ENCODE measurements at regions of chr18 and their contacts with region 1.

Region 1: GRCh38 chr18:3593904-3594661 is 144.1 kb downstream of the TGIF1 start:
- DNase-seq: peak; percentile 96
- H3K4me3 Mint-ChIP-seq: peak overlapping the region; percentile 89
- H3K27ac Mint-ChIP-seq: peak overlapping the region; percentile 97
- H3K4me1 Mint-ChIP-seq: peaks cover 39% of the 10 kb centered on the region
- H3K27me3 Mint-ChIP-seq: no peaks in the 10 kb centered on the region

Region 2: GRCh38 chr18:3062798-3063680 is 531.0 kb before region 1 on chr18:
- intact Hi-C with region 1: loop called (anchors 10 kb)
- DNase-seq: peak; percentile 93
- H3K4me3 Mint-ChIP-seq: peak overlapping the region; percentile 62
- H3K27ac Mint-ChIP-seq: peak overlapping the region; percentile 79
- H3K4me1 Mint-ChIP-seq: peaks cover 66% of the 10 kb centered on the region
- H3K27me3 Mint-ChIP-seq: no peaks in the 10 kb centered on the region

Region 3: GRCh38 chr18:3297025-3297984 is 296.8 kb before region 1 on chr18:
- intact Hi-C with region 1: loop called (anchors 2 kb)
- DNase-seq: peak; percentile 98
- H3K4me3 Mint-ChIP-seq: peak overlapping the region; percentile 93
- H3K27ac Mint-ChIP-seq: peak overlapping the region; percentile 82
- H3K4me1 Mint-ChIP-seq: peaks cover 11% of the 10 kb centered on the region
- H3K27me3 Mint-ChIP-seq: peaks cover 32% of the 10 kb centered on the region

Region 4: DNA sequence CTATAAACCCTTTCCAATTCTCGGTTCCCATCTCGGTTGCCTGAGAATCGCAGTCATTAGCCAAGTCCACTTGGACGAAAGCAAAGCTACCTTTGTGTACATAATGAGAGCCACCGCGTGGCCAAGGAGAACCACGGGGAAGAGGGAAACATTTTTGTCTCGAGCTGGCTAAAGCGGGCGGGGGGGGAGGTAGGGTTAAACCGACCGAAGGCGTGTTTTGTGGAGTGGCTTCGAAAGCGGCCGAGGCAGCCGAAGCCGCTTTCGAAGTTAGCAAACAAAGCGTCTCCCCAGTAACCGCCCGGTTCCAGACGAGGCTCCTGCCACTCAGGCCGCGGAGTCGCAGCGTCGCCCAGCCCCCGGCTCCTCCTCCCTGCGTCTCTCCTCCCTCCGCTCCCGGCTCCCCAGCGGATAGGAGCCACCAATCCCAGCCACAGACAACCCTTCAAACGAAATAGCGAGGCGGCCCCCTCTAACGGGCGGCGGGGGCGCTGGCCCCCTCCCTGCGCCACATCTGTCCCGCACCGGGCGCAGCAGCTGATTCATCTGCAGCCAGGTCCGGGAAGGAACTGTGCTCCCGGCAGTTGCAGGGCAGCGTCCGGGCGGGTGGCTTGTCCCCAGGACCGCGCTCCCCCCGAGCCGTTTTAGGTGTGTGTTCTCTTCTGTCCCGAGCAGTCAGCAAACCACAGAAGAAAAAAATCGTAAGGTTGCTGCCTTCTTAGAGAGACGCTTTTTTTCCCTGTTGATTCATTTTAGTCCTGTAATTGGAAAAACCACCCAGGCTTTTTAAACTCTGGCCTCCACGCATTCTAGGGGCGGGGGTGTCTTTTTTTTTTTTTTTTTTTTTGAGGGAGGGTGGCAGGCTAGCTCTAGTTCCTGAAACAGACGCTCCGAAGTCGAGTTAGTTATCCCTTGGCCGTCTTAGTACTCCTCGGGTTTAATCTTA is 145.9 kb before region 1 on chr18:
- intact Hi-C with region 1: loop called (anchors 1 kb)
- DNase-seq: peak; percentile 96
- H3K4me3 Mint-ChIP-seq: peak overlapping the region; percentile 96
- H3K27ac Mint-ChIP-seq: peak overlapping the region; percentile 99
- H3K4me1 Mint-ChIP-seq: peaks cover 35% of the 10 kb centered on the region
- H3K27me3 Mint-ChIP-seq: no peaks in the 10 kb centered on the region

Region 5: GRCh38 chr18:3604498-3605408 is 10.7 kb after region 1 on chr18:
- intact Hi-C with region 1: loop called (anchors 1 kb)
- DNase-seq: peak; percentile 82
- H3K4me3 Mint-ChIP-seq: no peak overlapping the region
- H3K27ac Mint-ChIP-seq: no peak overlapping the region
- H3K4me1 Mint-ChIP-seq: peaks cover 20% of the 10 kb centered on the region
- H3K27me3 Mint-ChIP-seq: no peaks in the 10 kb centered on the region

Region 6: GRCh38 chr18:3652380-3653262 is 58.5 kb after region 1 on chr18:
- intact Hi-C with region 1: loop called (anchors 2 kb)
- DNase-seq: peak; percentile 77
- H3K4me3 Mint-ChIP-seq: peak overlapping the region; percentile 54
- H3K27ac Mint-ChIP-seq: peak overlapping the region; percentile 92
- H3K4me1 Mint-ChIP-seq: peaks cover 41% of the 10 kb centered on the region
- H3K27me3 Mint-ChIP-seq: no peaks in the 10 kb centered on the region

Region 7: DNA sequence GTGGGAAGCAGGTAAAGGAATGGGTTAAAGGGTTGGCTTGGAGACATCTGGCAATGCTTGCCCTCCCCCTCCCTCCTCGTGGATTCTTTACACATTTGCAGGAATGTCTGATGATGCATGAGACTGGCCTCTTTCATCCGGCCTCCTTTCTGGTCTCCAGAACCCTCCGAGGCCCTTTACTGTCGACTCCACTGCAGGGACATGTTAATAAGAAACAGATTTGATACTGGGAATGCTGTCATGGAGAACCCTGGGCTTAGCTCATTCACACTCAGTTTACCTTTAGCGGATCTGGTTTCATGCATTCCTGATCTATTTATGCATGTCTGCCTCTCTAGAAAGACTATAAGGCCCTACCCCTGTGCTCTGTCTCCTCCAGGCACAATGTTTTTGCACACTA is 94.6 kb after region 1 on chr18:
- intact Hi-C with region 1: no loop called
- DNase-seq: no peak
- H3K4me3 Mint-ChIP-seq: no peak overlapping the region
- H3K27ac Mint-ChIP-seq: no peak overlapping the region
- H3K4me1 Mint-ChIP-seq: no peaks in the 10 kb centered on the region
- H3K27me3 Mint-ChIP-seq: peaks cover 4% of the 10 kb centered on the region